Activated naive CD4-positive, alpha-beta T cell treated with anti-CD3 and anti-CD28 coated beads, Interleukin-2, amount 10 ng/mL, durations not matched to agents 7 days and 5 days (primary cell): ENCODE measurements at regions of chr6 and their contacts with region 1.

Region 1: DNA sequence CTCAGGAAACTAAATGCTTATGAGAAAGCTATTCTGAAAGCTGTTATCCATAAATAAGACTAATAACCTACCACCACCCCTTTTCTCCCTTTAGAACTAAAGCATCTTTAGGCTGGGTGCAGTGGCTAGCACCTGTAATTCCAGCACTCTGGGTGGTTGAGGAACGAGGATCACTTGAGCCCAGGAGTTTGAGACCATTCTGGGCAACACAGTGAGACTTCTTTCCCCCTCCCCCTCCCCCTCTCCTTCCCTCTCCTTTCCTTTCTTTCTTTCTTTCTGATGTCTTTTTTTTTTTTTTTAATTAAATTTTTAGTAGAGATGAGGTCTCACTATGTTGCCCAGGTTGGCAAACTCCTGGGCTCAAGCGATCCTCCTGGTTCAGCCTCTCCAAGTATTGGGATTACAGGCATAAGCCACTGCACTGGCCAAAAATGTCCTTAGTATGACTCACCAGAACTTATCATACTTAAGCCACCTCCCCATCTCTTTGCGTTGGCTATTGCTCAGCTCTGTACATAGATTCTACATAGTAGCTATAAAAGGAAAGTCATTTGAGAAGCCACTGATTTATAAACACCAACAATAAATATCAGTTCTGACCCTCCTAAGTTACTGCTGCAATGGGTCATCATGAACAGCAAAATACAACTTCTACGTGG is 54.8 kb upstream of the SPDEF start:
- DNase-seq: no peak
- H3K4me3 Mint-ChIP-seq: no peak overlapping the region
- H3K27ac Mint-ChIP-seq: no peak overlapping the region
- H3K4me1 Mint-ChIP-seq: peaks cover 6% of the 10 kb centered on the region
- H3K27me3 Mint-ChIP-seq: no peaks in the 10 kb centered on the region

Region 2: DNA sequence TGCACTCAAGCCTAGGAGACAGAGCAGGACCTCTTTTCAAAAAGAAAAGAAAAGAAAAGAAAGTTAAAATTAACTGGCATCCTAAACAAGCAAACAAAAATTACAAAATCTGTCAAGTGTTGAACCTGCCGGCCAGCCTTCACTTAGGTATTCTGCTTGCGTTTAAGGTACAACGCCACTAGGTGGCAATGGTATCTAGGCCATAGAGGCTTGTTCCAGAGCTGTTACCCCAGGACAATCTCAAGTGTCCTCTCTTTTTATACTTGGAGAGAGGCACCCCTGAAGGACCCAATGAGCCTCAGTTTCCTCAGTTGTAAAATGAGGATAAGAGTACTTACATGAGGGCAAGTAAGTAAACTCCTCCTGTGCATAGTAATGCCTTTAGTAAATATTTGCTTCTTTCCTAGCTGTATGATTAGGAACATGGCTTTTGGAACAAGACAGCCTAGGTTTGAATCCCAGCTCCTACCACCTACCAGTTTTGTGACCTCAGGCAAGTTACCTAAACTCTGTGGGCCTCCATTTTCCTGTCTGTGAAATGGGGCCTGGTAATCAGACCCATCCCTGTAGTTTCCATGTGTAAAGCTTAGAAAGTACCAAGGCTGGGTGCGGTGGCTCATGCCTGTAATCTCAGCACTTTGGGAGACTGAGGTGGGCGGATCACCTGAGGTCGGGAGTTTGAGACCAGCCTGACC is 150.9 kb before region 1 on chr6:
- CTCF ChIA-PET with region 1: interaction called, 75 read pairs
- DNase-seq: peak; percentile 65
- H3K4me3 Mint-ChIP-seq: no peak overlapping the region
- H3K27ac Mint-ChIP-seq: no peak overlapping the region
- H3K4me1 Mint-ChIP-seq: no peaks in the 10 kb centered on the region
- H3K27me3 Mint-ChIP-seq: peaks cover 49% of the 10 kb centered on the region

Region 3: DNA sequence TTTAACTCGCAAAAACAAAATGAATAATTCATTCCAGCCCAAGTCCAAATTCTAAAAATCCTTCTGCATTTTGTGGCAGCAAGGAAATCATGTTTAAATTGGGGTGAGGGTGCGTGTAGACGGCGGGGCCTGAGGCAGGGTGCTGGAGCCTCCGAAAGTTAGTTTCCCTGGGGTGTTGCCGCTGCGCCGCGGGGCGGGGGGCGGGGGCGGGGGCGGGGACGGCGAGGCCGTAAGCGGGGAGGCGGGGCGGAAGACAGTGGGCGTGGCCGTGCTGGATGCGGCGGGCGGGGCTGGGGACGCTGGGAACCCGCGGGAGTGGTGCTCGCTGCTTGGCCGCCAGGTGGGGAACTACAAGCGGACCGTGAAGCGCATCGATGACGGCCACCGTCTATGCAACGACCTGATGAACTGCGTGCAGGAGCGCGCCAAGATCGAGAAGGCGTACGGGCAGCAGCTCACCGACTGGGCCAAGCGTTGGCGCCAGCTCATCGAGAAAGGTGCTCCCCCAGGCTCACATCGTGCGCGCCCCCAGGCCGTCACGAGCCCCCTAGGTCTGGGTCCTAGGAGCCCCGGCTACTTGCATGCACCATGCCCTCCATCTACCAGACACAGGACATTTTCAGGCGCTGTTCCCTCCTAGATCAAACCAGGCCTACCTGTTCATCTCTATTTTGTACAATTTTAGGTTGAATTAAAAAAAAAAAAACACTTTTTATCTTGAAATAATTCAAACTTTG is 83.8 kb before region 1 on chr6:
- CTCF ChIA-PET with region 1: interaction called, 27 read pairs
- DNase-seq: peak; percentile 97
- H3K4me3 Mint-ChIP-seq: no peak overlapping the region
- H3K27ac Mint-ChIP-seq: peak overlapping the region; percentile 16
- H3K4me1 Mint-ChIP-seq: peaks cover 8% of the 10 kb centered on the region
- H3K27me3 Mint-ChIP-seq: peaks cover 14% of the 10 kb centered on the region

Region 4: GRCh38 chr6:34593701-34594100 is 17.2 kb before region 1 on chr6:
- CTCF ChIA-PET with region 1: interaction called, 11 read pairs
- DNase-seq: no peak
- H3K4me3 Mint-ChIP-seq: no peak overlapping the region
- H3K27ac Mint-ChIP-seq: no peak overlapping the region
- H3K4me1 Mint-ChIP-seq: peaks cover 15% of the 10 kb centered on the region
- H3K27me3 Mint-ChIP-seq: no peaks in the 10 kb centered on the region